ENCODE measurements at regions of chr2 and their contacts with region 1.

Region 1: GRCh38 chr2:140695163-140695562 is 1435.7 kb downstream of the LRP1B start:
- DNase-seq: peak; percentile 69
- ATAC-seq: no peak
- H3K4me3 ChIP-seq: no peak overlapping the region
- H3K27ac ChIP-seq: no peak overlapping the region
- H3K4me1 ChIP-seq: no peaks in the 10 kb centered on the region
- H3K27me3 ChIP-seq: no peaks in the 10 kb centered on the region
- CTCF ChIP-seq: no peak

Region 2: GRCh38 chr2:140679752-140680151 is 15.4 kb before region 1 on chr2:
- CTCF ChIA-PET with region 1: no interaction called
- POLR2A ChIA-PET with region 1: interaction called, 15 read pairs
- in situ Hi-C with region 1: no loop called
- intact Hi-C with region 1: no loop called
- DNase-seq: no peak
- ATAC-seq: no peak
- H3K4me3 ChIP-seq: no peak overlapping the region
- H3K27ac ChIP-seq: no peak overlapping the region
- H3K4me1 ChIP-seq: no peaks in the 10 kb centered on the region
- H3K27me3 ChIP-seq: no peaks in the 10 kb centered on the region
- CTCF ChIP-seq: no peak

Region 3: GRCh38 chr2:140797718-140798117 is 102.6 kb after region 1 on chr2:
- CTCF ChIA-PET with region 1: interaction called, 10 read pairs
- POLR2A ChIA-PET with region 1: no interaction called
- in situ Hi-C with region 1: no loop called
- intact Hi-C with region 1: no loop called
- DNase-seq: no peak
- ATAC-seq: no peak
- H3K4me3 ChIP-seq: no peak overlapping the region
- H3K27ac ChIP-seq: no peak overlapping the region
- H3K4me1 ChIP-seq: no peaks in the 10 kb centered on the region
- H3K27me3 ChIP-seq: no peaks in the 10 kb centered on the region
- CTCF ChIP-seq: no peak

Region 4: GRCh38 chr2:140851258-140851981 is 156.3 kb after region 1 on chr2:
- CTCF ChIA-PET with region 1: no interaction called
- POLR2A ChIA-PET with region 1: no interaction called
- in situ Hi-C with region 1: no loop called
- intact Hi-C with region 1: no loop called
- DNase-seq: no peak
- ATAC-seq: no peak
- H3K4me3 ChIP-seq: no peak overlapping the region
- H3K27ac ChIP-seq: no peak overlapping the region
- H3K4me1 ChIP-seq: no peaks in the 10 kb centered on the region
- H3K27me3 ChIP-seq: no peaks in the 10 kb centered on the region
- CTCF ChIP-seq: no peak

Measured in Panc1 (cell line).